ENCODE measurements at regions of chr3 and their contacts with region 1.

Region 1: DNA sequence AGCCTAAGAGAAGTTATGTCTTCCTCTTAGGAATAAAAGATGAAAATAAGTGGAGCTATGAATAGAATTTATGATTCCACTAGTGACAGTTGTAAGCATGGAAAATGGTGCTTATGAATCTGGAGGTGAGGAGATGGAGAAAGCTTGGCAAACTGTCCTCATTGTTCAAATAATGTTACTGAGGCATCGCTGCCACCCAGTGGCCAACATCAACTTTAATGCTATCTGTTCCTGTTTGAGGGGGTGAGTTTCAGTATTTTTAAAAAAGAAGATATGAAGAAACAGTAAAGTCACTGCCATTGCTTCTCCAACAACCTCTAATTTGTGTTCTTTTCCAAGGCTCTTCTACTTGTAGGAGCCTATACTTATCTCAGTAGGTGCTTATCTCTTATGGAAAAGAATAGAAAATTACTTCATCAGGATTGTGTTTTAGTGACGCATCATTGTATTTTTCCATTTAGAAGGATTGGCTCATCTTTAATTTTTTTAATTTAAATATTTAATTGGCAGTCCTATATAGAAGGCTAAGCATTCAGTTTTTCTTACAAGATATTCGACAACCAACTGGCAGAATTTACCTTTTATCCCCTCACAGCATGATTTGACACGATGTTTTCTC is 260.4 kb upstream of the P2RY1 start:
- DNase-seq: peak; percentile 72 to 85 (median 80)
- H3K4me3 ChIP-seq: no peak overlapping the region
- H3K27ac ChIP-seq: no peak overlapping the region
- H3K4me1 ChIP-seq: no peaks in the 10 kb centered on the region
- H3K27me3 ChIP-seq: no peaks in the 10 kb centered on the region
- CTCF ChIP-seq: peak; percentile 31 to 67 (median 62)
- EP300 ChIP-seq: no peak
- POLR2A ChIP-seq: no peak

Region 2: GRCh38 chr3:152100491-152101132 is 474.0 kb before region 1 on chr3:
- intact Hi-C with region 1: no loop called
- DNase-seq: no peak
- H3K4me3 ChIP-seq: no peak overlapping the region
- H3K27ac ChIP-seq: no peak overlapping the region
- H3K4me1 ChIP-seq: no peaks in the 10 kb centered on the region
- H3K27me3 ChIP-seq: no peaks in the 10 kb centered on the region
- CTCF ChIP-seq: no peak
- EP300 ChIP-seq: no peak
- POLR2A ChIP-seq: no peak

Region 3: DNA sequence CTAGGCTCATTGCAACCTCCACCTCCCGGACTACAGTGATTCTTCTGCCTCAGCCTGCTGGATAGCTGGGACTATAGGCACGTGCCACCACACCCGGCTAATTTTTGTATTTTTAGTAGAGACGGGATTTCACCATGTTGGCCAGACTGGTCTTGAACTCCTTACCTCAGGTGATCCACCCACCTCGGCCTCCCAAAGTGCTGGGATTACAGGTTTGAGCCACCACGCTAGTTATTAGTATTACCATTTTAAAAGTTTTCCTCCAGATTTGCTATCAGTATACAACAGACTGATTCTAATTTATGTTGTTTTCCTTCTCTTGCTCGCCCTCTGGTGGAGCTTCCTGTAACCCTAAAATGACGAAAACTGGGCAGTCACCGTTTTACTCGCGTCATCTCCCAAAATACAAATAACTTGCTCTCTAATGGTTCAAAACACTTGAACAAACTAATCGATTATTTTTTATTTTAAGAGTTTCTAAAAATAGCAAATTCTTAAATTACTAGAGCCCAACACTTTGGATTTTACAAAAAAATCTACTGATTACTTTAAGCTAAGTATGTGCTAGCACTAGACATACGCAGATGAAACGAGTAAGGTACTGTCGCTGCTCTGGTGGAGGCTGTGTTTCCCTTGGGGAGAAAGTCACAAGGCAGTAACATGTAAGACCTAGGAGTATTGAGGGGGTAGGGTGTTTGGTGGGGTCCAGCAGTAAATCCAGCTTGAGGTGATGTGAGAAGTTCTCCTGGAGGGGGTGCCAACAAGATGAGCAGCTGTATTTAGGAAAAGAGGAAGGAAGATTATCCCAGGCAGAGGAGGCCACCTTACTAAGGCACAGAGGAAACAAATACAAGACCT is 102.5 kb before region 1 on chr3:
- intact Hi-C with region 1: loop called in 1 of 4 experiments (anchors 10 kb)
- DNase-seq: peak; percentile 33 to 75 (median 51)
- H3K4me3 ChIP-seq: no peak overlapping the region
- H3K27ac ChIP-seq: no peak overlapping the region
- H3K4me1 ChIP-seq: no peaks in the 10 kb centered on the region
- H3K27me3 ChIP-seq: no peaks in the 10 kb centered on the region
- CTCF ChIP-seq: peak; percentile 23 to 59 (median 55)
- EP300 ChIP-seq: no peak
- POLR2A ChIP-seq: no peak

Region 4: DNA sequence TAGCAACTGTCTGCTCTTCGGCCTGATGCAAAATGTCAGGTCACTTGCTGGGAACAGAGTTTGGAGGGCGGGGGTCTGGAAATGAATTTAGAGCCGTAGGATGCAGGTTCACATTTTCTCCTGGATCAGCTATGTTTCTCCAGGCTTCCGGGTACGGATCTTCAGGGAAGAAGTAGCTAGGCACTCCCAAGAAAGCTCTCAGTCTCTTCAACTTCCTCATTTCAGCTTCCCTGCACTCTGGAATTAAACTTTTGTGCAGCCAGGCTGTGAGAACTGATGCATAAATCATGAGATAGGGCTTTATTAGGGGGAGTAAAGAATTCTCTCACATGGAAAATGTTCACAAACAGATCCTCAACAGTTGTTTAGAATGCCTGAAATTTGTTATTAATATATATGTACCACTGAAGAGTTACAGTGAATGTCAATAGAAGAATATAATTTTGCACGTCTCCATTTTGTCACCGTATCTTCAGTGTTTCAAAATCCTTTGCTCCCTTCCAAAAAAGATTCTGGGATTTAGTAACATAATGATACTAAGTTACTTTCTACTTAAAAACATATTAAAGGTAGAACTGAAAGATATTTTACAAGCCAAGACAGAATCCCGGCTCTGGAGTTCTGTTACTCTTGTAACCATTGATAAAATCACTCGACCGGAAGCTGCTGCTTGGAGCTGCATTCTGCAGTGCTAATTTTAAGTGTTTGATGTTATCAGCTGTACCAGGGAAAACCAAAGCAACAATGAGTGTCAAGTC is 81.8 kb after region 1 on chr3:
- intact Hi-C with region 1: no loop called
- DNase-seq: no peak
- H3K4me3 ChIP-seq: no peak overlapping the region
- H3K27ac ChIP-seq: no peak overlapping the region
- H3K4me1 ChIP-seq: peaks cover 2% of the 10 kb centered on the region
- H3K27me3 ChIP-seq: no peaks in the 10 kb centered on the region
- CTCF ChIP-seq: no peak
- EP300 ChIP-seq: no peak
- POLR2A ChIP-seq: no peak

Region 5: DNA sequence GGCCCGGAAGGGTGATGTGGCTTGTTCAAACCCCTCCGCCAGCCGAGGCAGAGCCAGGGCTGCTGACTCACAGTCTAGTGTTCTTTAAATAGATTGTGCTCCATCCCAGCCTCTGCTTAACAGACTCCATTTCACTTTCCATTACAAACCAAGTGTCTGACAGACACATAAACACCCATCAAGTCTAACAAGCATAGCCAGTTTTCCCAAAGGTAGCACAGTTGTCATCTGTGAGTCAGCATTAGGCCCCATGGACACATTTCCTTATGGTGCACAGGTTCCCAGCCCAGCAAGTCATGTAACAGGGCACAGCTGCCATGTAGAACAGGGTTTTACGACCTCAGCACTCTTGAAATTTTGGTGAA is 477.5 kb after region 1 on chr3:
- intact Hi-C with region 1: no loop called
- DNase-seq: no peak
- H3K4me3 ChIP-seq: no peak overlapping the region
- H3K27ac ChIP-seq: no peak overlapping the region
- H3K4me1 ChIP-seq: no peaks in the 10 kb centered on the region
- H3K27me3 ChIP-seq: no peaks in the 10 kb centered on the region
- CTCF ChIP-seq: no peak
- EP300 ChIP-seq: no peak
- POLR2A ChIP-seq: no peak

Measured in ovary (tissue), 10 donors.